ENCODE measurements at regions of chr4 and their contacts with region 1.

Region 1: DNA sequence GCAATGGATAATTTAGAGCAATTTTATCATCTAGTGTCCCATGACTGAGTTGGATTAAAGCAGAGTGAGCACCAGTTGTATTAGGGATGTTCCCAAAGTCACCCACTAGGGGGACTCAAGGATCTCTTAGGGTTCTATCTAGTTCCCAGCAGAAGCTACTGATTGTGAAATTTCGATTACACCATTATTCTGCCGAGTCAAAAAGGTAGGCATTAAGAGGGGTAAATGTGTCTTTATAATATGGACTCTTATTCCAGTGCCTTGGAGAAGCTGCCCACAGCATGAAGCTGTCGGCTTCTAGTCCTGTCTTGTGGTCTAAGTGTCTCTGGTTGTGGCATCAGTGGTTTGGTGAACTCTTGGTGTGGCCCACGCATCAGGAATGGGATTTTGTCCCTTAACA is 53.3 kb downstream of the RGS12 start:
- DNase-seq: no peak
- H3K4me3 ChIP-seq: no peak overlapping the region
- H3K27ac ChIP-seq: no peak overlapping the region
- H3K4me1 ChIP-seq: no peaks in the 10 kb centered on the region
- H3K27me3 ChIP-seq: no peaks in the 10 kb centered on the region
- CTCF ChIP-seq: peak; percentile 82 to 87 (median 86)

Region 2: DNA sequence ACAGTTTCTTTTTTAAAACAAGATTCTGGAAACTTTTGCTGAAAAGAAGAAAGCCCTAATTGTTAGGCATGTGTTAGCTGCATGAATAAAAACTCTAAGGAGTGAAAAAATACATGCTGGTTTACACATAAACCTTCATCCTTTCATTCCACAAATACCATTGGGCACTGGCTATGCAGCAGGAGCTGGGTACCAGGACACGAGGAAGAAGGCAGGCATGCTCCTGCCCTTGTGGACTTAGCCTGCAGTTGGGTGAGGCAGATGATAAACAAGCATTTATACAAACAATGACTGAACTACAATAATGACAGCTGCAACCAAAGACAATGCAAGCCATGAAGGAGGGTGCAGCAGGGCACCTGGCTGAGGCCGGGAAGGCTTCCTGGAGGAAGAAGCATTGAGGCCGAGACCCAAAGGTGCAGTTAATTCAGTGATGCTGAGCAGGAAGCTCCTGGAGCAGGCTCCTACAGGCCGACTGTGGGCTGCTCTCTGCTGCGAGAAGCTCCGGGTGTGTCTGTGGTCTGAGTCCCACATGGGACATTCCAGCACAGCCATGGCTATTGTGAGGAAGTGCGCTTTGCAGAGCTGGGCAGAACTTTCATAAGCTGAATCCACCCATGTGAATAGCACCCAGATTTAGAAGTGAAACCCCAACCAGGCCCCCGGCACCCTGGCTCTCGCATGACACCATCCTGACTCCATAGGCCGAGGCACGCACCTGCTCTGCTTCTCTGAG is 1040.2 kb before region 1 on chr4:
- intact Hi-C with region 1: no loop called
- DNase-seq: no peak
- H3K4me3 ChIP-seq: no peak overlapping the region
- H3K27ac ChIP-seq: no peak overlapping the region
- H3K4me1 ChIP-seq: no peaks in the 10 kb centered on the region
- H3K27me3 ChIP-seq: no peaks in the 10 kb centered on the region
- CTCF ChIP-seq: no peak

Region 3: GRCh38 chr4:3330707-3331106 is 15.4 kb before region 1 on chr4:
- intact Hi-C with region 1: no loop called
- DNase-seq: no peak
- H3K4me3 ChIP-seq: no peak overlapping the region
- H3K27ac ChIP-seq: no peak overlapping the region
- H3K4me1 ChIP-seq: no peaks in the 10 kb centered on the region
- H3K27me3 ChIP-seq: no peaks in the 10 kb centered on the region
- CTCF ChIP-seq: no peak

Region 4: GRCh38 chr4:3442959-3443749 is 97.0 kb after region 1 on chr4:
- intact Hi-C with region 1: loop called (anchors 1 kb)
- DNase-seq: no peak
- H3K4me3 ChIP-seq: no peak overlapping the region
- H3K27ac ChIP-seq: no peak overlapping the region
- H3K4me1 ChIP-seq: peaks cover 0 to 3% of the 10 kb centered on the region in 2 donors
- H3K27me3 ChIP-seq: no peaks in the 10 kb centered on the region
- CTCF ChIP-seq: peak; percentile 97 to 99 (median 98)

Region 5: GRCh38 chr4:3531879-3532713 is 185.9 kb after region 1 on chr4 and contains the start of gene LRPAP1:
- intact Hi-C with region 1: loop called (anchors 1 kb)
- DNase-seq: peak; percentile 65 to 95
- H3K4me3 ChIP-seq: peak within 1 kb of the TSS; percentile 96 to 99
- H3K27ac ChIP-seq: peak within 1 kb of the TSS; percentile 72 to 76
- H3K4me1 ChIP-seq: peaks cover 3 to 20% of the 10 kb centered on the region in 2 donors
- H3K27me3 ChIP-seq: no peaks in the 10 kb centered on the region
- CTCF ChIP-seq: no peak
- total RNA-seq, gene LRPAP1: 172 TPM

Region 6: GRCh38 chr4:3871181-3871871 is 525.2 kb after region 1 on chr4:
- intact Hi-C with region 1: loop called (anchors 10 kb)
- DNase-seq: no peak
- H3K4me3 ChIP-seq: no peak overlapping the region
- H3K27ac ChIP-seq: no peak overlapping the region
- H3K4me1 ChIP-seq: no peaks in the 10 kb centered on the region
- H3K27me3 ChIP-seq: no peaks in the 10 kb centered on the region
- CTCF ChIP-seq: no peak

Measured in ascending aorta (tissue), 2 donors.